ENCODE measurements at regions of chr12 and their contacts with region 1.

Region 1: DNA sequence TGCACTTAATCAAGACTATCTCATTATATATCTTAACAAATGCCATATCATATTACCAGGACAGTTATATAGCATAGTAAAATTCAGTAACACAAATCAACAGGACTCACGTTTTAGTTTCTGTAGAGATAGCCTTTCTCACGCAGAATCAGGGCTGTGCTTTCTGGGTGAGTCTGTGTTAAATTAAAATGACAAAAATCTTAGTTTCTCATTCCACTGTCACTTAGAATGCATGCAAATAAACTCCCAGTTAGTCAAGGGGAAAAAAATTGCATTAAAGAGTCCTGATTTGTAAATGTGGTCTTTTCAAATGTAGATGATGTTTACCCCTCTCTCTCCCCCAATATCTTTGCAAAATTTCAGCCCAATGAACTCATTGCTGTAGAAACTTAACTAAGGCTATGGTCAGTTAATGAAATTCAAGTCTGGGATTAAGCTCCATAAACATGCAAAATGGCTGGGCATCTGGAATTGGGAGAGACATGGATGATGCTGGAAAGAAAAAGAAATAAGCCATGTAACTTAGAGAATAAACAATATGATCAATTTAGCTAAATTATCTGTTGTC is 77.8 kb upstream of the MGAT4C start:
- DNase-seq: no peak
- H3K4me3 ChIP-seq: no peak overlapping the region
- H3K27ac ChIP-seq: no peak overlapping the region
- H3K27me3 ChIP-seq: no peaks in the 10 kb centered on the region
- CTCF ChIP-seq: no peak

Region 2: GRCh38 chr12:86389949-86390348 is 55.9 kb after region 1 on chr12:
- CTCF ChIA-PET with region 1: interaction called, 13 read pairs
- POLR2A ChIA-PET with region 1: no interaction called
- DNase-seq: peak; percentile 6
- H3K4me3 ChIP-seq: no peak overlapping the region
- H3K27ac ChIP-seq: no peak overlapping the region
- H3K27me3 ChIP-seq: no peaks in the 10 kb centered on the region
- CTCF ChIP-seq: no peak

Region 3: GRCh38 chr12:86445356-86445755 is 111.3 kb after region 1 on chr12:
- CTCF ChIA-PET with region 1: no interaction called
- POLR2A ChIA-PET with region 1: no interaction called
- DNase-seq: no peak
- H3K4me3 ChIP-seq: no peak overlapping the region
- H3K27ac ChIP-seq: no peak overlapping the region
- H3K27me3 ChIP-seq: no peaks in the 10 kb centered on the region
- CTCF ChIP-seq: no peak

Region 4: DNA sequence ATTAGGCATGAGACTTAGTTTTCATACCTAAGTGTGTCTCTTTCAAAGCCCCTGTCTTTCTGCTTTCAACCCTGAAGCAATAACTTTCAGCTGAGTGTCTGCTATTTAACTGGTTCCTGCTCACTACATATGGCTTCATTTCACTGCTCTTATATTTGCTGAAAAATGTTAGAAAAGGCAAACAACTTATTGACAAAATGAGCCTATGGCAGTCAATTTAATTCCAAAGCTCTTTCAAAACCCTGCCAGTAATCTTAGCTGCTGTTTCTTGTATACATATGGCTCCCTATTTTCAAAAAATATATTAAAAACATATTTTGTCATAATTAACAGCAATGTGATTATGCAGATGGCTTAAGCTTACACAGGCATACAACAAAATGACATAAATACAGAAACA is 256.3 kb after region 1 on chr12:
- CTCF ChIA-PET with region 1: no interaction called
- POLR2A ChIA-PET with region 1: no interaction called
- DNase-seq: no peak
- H3K4me3 ChIP-seq: no peak overlapping the region
- H3K27ac ChIP-seq: no peak overlapping the region
- H3K27me3 ChIP-seq: no peaks in the 10 kb centered on the region
- CTCF ChIP-seq: no peak